Mammary epithelial cell (primary cell): ENCODE measurements at regions of chr1 and their contacts with region 1.

Region 1: DNA sequence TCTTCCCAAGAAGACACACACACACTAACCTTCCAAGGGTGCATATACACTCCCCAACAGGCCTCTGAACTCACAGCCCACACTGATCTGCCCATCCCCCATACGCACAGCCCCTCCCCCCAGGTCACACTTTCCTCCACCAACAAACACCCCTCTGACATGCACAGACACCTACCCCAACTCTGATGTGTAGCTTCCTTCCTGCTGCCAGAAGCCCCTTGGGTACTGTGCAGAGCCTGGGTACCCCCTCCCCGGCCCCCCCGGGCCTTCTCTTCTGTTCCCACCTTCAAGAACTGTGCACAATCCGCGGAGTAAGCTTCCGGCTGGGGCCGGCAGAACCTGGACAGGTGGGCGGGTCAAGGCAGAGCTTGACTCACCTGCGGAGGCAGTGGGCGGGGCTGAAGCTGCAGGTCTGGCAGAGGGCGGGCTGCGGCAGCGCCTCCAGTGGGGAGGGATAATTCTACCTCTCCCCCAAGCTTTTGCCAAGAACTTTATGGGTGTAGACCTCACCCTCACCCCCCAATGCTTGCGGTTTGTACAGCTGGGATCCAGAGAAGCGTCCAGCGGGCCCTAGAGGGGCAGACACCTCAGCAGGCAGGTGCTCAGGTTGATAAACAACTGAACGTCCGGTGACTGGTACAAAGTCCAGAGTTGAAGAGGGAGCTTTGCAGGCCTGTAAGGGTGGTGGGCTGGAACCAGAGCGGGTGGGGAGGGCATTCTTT is at the start of gene C1orf210:
- DNase-seq: peak; percentile 83
- H3K4me3 ChIP-seq: peak within 1 kb of the TSS; percentile 46 to 66 (median 58)
- H3K27ac ChIP-seq: no peak within 1 kb of the TSS
- H3K4me1 ChIP-seq: peaks cover 13% of the 10 kb centered on the region
- H3K27me3 ChIP-seq: no peaks in the 10 kb centered on the region
- CTCF ChIP-seq: peak; percentile 49 to 78
- total RNA-seq, gene C1orf210: 7.0 to 7.2 TPM

Region 2: DNA sequence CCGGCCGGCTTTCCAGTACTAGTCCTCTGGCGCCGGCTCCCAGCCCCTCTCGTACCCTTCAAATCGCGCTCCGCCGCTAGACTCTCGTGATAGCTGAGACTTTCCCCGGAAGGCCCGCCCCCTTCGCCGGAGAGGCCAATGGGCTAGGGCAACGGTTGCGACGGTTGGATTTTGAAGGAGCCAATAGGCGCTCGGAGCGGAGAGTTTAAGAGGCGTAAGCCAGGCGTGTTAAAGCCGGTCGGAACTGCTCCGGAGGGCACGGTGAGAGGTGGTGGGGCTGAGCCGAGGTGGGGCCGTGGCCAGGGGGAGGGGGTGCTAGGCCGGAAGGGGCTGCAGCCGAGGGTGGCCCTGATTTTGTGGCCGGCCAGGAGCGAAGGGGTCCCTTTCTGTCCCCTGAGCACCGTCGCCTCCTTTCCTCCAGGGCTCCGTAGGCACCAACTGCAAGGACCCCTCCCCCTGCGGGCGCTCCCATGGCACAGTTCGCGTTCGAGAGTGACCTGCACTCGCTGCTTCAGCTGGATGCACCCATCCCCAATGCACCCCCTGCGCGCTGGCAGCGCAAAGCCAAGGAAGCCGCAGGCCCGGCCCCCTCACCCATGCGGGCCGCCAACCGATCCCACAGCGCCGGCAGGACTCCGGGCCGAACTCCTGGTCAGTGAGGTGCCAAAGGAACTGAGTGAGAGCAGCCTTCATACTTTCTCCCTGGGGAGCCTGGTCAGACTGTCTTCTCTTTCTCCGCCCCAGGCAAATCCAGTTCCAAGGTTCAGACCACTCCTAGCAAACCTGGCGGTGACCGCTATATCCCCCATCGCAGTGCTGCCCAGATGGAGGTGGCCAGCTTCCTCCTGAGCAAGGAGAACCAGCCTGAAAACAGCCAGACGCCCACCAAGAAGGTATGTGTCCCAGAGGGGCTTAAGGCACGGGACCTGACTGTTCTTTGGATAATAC is 73.6 kb after region 1 on chr1 and contains the start of gene CDC20:
- CTCF ChIA-PET with region 1: interaction called, 6 read pairs
- dilution Hi-C with region 1: no loop called
- in situ Hi-C with region 1: no loop called
- intact Hi-C with region 1: loop called (anchors 5 kb)
- DNase-seq: peak; percentile 98
- H3K4me3 ChIP-seq: peak within 1 kb of the TSS; percentile 74 to 83 (median 80)
- H3K27ac ChIP-seq: peak within 1 kb of the TSS; percentile 92
- H3K4me1 ChIP-seq: peaks cover 27% of the 10 kb centered on the region
- H3K27me3 ChIP-seq: no peaks in the 10 kb centered on the region
- CTCF ChIP-seq: no peak
- total RNA-seq, gene CDC20: 1.7 to 121 TPM

Region 3: GRCh38 chr1:43373066-43373940 is 87.9 kb after region 1 on chr1:
- CTCF ChIA-PET with region 1: no interaction called
- dilution Hi-C with region 1: loop called (anchors 5 kb)
- in situ Hi-C with region 1: no loop called
- intact Hi-C with region 1: no loop called
- DNase-seq: peak; percentile 92
- H3K4me3 ChIP-seq: no peak overlapping the region
- H3K27ac ChIP-seq: peak overlapping the region; percentile 80
- H3K4me1 ChIP-seq: peaks cover 41% of the 10 kb centered on the region
- H3K27me3 ChIP-seq: no peaks in the 10 kb centered on the region
- CTCF ChIP-seq: no peak

Region 4: DNA sequence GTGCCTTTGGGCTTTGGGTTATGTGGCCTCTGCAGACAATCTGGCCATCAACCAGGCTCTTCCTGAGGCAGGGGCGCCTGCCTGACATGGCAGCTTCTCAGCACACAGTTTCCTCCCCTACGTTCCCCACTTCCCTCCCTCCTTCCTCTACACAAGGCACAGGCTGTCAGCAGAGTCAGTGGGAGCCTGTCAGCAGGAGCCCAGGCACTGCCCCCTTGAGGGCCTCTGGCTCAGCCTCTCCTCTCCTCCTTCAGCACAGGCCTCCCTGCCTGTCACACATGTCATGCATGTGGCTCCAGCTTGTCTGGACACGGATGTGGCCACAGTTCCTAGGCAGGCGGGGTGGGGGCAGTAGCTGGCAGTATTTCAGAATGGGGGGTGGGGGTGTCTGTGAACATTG is 596.0 kb after region 1 on chr1:
- CTCF ChIA-PET with region 1: no interaction called
- dilution Hi-C with region 1: no loop called
- in situ Hi-C with region 1: no loop called
- intact Hi-C with region 1: no loop called
- DNase-seq: no peak
- H3K4me3 ChIP-seq: no peak overlapping the region
- H3K27ac ChIP-seq: no peak overlapping the region
- H3K4me1 ChIP-seq: peaks cover 25% of the 10 kb centered on the region
- H3K27me3 ChIP-seq: no peaks in the 10 kb centered on the region
- CTCF ChIP-seq: no peak

Region 5: DNA sequence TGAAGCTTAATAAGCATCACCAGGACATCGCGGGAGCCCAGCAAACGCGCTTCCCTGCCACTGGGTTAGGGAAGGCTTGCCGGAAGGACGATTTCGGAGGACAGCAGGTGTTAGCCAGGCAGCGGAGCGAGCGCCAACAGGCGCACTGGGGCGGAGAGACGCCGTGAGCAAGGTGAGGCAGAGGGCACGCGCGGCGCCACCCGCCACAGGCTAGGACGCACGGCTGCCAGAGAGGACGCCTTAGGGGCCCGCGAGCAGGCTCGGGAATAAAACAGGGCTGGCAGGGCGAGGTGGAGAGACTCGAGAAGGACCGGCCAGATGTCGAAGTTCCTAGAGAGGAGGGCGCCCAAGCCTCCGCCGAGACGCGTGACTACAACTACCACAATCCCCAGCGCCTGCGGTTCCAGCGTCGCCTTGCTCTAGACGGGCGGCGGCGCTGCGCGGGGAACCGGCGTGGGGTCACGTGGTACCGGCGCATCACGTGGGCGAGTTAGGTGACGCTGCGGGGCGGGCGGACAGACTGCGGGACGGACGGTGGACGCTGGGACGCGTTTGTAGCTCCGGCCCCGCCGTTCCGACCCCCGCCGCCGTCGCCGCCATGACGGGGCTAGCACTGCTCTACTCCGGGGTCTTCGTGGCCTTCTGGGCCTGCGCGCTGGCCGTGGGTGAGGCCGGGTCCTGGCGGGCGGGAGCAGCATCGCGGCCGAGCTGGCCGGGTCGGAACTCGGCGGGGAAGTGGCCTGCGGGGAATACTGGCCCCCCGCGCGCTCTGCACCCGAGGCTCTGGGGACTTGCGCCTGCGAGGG is 689.2 kb after region 1 on chr1 and contains the start of gene ATP6V0B:
- CTCF ChIA-PET with region 1: no interaction called
- dilution Hi-C with region 1: loop called (anchors 10 kb)
- in situ Hi-C with region 1: no loop called
- intact Hi-C with region 1: no loop called
- DNase-seq: peak; percentile 93
- H3K4me3 ChIP-seq: peak within 1 kb of the TSS; percentile 86 to 94 (median 89)
- H3K27ac ChIP-seq: peak within 1 kb of the TSS; percentile 64
- H3K4me1 ChIP-seq: peaks cover 39% of the 10 kb centered on the region
- H3K27me3 ChIP-seq: no peaks in the 10 kb centered on the region
- CTCF ChIP-seq: no peak
- total RNA-seq, gene ATP6V0B: 84.4 to 127 TPM